Gastrocnemius medialis (tissue), 4 donors: ENCODE measurements at regions of chr6 and their contacts with region 1.

Region 1: DNA sequence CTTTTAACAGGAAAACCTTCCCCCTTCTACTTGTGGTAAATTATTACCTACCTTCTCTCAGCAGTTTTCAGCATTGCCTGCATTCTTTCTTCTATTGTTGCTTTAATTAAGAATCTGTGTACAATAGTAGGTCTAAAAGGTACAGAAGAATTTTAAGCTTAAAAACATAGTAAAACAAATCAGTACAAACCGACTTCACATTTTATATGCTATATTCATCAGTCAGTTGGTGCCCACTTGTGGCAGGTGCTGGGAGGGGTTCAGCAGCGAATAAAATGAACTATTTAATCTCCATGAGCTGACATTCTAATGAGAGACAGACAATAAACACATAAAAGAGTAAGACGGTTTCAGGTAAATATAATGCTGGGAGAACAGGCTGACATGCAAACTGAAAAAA is 73.4 kb upstream of the FBXO30 start:
- DNase-seq: no peak
- ATAC-seq: no peak
- H3K4me3 ChIP-seq: no peak overlapping the region
- H3K27ac ChIP-seq: no peak overlapping the region
- H3K4me1 ChIP-seq: peaks cover 7 to 15% of the 10 kb centered on the region in 2 donors
- H3K27me3 ChIP-seq: no peaks in the 10 kb centered on the region
- CTCF ChIP-seq: peak; percentile 25 to 55 (median 38)
- POLR2A ChIP-seq: no peak

Region 2: DNA sequence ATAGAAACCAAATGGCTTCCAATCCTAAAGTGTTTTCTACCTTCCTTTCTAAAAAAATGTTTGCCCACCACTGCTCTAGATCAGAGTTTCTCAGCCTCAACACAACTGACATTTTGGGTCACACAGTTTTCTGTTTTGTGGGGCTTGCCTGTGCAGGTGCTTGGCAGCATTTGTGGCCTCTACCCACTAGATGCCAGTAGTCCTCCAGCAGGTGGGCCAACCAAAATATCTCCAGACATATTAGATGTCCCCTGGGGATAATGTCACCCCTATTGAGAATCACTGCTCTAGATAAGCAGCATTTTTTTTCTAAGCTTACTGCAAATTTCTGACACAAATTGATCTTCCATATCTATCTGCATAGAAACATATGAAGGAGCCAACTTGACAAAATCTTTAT is 126.4 kb before region 1 on chr6:
- in situ Hi-C with region 1: no loop called
- intact Hi-C with region 1: loop called (anchors 10 kb)
- DNase-seq: no peak
- ATAC-seq: no peak
- H3K4me3 ChIP-seq: no peak overlapping the region
- H3K27ac ChIP-seq: no peak overlapping the region
- H3K4me1 ChIP-seq: no peaks in the 10 kb centered on the region
- H3K27me3 ChIP-seq: no peaks in the 10 kb centered on the region
- CTCF ChIP-seq: peak in 2 of 5 experiments; percentile 16 to 33
- POLR2A ChIP-seq: no peak

Region 3: GRCh38 chr6:145842693-145843546 is 45.0 kb before region 1 on chr6:
- in situ Hi-C with region 1: no loop called
- intact Hi-C with region 1: loop called (anchors 5 kb)
- DNase-seq: no peak
- ATAC-seq: no peak
- H3K4me3 ChIP-seq: no peak overlapping the region
- H3K27ac ChIP-seq: no peak overlapping the region
- H3K4me1 ChIP-seq: peaks cover 13% of the 10 kb centered on the region in 2 donors
- H3K27me3 ChIP-seq: no peaks in the 10 kb centered on the region
- CTCF ChIP-seq: no peak
- POLR2A ChIP-seq: no peak